Tibial artery (tissue), 4 donors: ENCODE measurements at regions of chr12 and their contacts with region 1.

Region 1: DNA sequence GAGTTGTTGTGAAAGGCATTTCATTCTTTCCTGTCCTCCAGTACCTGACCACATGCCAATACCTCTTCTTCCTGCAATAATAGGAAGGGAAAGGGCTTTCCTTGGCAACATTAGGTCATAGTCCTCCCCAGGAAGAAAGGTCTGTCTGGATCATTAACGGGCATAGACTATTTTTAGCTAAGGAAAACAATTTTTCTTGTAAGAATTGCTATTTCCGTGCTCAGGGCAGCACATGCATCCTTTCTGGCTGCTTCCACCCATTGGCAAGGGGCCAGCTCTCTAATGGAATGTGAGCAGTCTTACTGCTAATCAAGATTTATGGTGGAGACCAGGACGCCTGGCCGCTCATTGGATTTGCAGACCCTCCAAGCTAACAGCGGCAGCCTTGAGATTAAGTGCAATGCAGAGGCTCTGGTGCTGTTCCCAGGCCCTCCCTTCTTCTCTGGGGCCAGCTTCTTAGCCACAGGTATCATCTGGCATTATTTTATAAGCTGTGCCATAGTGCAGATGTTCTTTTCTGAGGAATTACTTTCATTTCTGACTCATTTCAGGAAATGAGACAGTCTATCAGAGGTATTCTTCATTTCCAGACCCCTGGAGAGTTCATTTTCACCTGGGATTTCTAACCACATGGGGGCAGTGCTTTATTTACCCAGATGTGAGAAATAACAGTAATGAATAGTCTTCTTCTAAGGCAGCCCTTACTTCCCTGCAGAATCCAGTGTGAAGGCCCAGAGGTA is 52.9 kb downstream of the ANO6 start:
- DNase-seq: peak; percentile 87 to 91
- H3K4me3 ChIP-seq: peak overlapping the region; percentile 27 to 35
- H3K27ac ChIP-seq: peak overlapping the region; percentile 63 to 77
- H3K4me1 ChIP-seq: peaks cover 0 to 97% (median 49%) of the 10 kb centered on the region in 4 donors
- H3K27me3 ChIP-seq: no peaks in the 10 kb centered on the region
- CTCF ChIP-seq: peak; percentile 41 to 49

Region 2: GRCh38 chr12:45215419-45216229 is 53.2 kb before region 1 on chr12 and contains the start of gene ANO6:
- intact Hi-C with region 1: loop called (anchors 10 kb)
- DNase-seq: peak; percentile 89 to 93
- H3K4me3 ChIP-seq: peak within 1 kb of the TSS; percentile 73 to 91
- H3K27ac ChIP-seq: peak within 1 kb of the TSS; percentile 92 to 97
- H3K4me1 ChIP-seq: peaks cover 0 to 28% (median 16%) of the 10 kb centered on the region in 4 donors
- H3K27me3 ChIP-seq: no peaks in the 10 kb centered on the region
- CTCF ChIP-seq: peak in 1 of 2 experiments; percentile 2

Region 3: GRCh38 chr12:45254254-45254653 is 14.6 kb before region 1 on chr12:
- intact Hi-C with region 1: no loop called
- DNase-seq: no peak
- H3K4me3 ChIP-seq: no peak overlapping the region
- H3K27ac ChIP-seq: no peak overlapping the region
- H3K4me1 ChIP-seq: peaks cover 0 to 61% (median 3%) of the 10 kb centered on the region in 4 donors
- H3K27me3 ChIP-seq: no peaks in the 10 kb centered on the region
- CTCF ChIP-seq: no peak